Naive thymus-derived CD4-positive, alpha-beta T cell (primary cell): ENCODE measurements at regions of chr22 and their contacts with region 1.

Region 1: DNA sequence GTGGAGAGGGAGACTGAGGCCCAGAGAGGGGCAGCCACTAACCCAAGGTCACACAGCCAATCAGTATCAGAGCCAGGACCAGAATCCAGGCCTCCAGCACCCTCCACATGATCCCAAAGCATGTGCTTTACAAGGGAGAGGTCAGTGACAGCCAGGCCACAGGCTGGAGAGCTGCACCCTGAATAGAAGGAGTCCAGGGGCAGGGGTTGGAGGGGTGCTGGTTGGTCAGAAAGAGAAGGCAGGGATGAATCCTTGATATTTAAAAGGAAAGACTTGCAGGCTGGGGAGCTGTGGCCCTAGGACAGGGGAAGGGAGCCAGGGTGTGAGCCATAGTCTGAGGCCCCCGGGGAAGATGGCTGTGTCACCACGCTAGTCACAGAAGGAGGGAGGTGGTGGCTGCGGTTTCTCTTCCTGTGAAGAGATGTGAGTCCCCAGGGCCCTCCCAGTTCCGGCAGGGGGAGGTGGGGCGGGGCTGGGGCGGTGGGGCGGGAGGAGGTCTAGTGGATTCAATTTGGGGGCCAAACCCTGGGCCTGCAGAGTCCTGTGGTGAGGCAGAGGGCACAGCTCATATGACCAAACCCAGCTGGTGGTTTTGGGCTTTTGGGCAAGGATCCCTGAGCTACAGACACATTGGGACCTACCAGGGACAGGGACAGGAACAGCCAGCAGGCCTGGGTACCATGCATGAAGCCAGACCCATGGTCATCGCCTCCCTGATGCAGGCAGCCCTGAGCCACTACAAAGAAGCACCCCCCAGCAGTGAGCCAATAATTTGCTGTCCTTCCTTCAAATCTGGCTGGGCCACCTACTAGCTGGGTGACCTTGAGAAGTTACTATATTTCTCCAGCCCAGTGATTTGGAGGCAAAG is 14.0 kb downstream of the RAC2 start:
- DNase-seq: peak; percentile 60 to 93 (median 89)
- ATAC-seq: peak; percentile 93
- H3K4me3 ChIP-seq: peak overlapping the region; percentile 54
- H3K4me3 Mint-ChIP-seq: peak overlapping the region; percentile 75 to 99 (median 86)
- H3K27ac ChIP-seq: peak overlapping the region; percentile 90
- H3K27ac Mint-ChIP-seq: peak overlapping the region; percentile 96 to 100 (median 99)
- H3K4me1 ChIP-seq: peaks cover 80 to 92% of the 10 kb centered on the region in 2 donors
- H3K4me1 Mint-ChIP-seq: peaks cover 75 to 92% (median 87%) of the 10 kb centered on the region in 7 donors
- H3K27me3 ChIP-seq: no peaks in the 10 kb centered on the region
- H3K27me3 Mint-ChIP-seq: no peaks in the 10 kb centered on the region

Region 2: DNA sequence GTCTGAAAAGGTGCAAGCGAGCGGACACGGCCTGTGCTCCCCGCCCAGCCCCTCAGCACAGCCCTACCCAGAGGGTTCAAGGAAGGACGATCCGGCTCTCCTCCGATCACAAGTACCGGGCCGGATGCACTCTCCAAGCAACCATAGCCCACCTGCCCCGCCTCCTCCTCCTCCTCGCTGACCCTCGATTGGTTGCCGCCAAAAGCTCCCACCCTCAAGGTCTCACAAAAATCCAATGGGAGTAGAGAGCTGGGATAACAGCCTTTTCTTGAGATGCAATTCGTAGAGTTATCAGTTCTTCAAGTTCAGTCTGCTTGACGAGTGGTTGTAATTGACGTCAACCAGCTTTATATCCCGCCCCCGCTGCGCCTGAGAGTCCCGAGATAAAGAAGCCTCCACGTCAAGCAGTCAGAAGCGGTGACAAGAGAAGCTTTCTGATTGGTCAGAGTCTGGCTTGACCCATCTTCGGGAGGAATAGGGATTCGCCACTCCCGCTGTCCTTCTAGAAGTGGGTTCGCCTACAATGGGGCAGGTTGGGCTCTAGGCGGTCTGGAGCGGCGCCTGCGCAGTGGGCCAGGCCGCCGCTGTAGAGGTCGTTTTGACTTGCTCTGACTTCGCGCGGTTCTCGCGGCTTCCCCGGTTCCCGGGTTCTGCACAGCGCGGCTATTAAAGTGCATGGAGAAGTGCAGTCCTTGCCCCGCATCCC is 453.9 kb before region 1 on chr22 and contains the start of gene IFT27:
- CTCF ChIA-PET with region 1: no interaction called
- POLR2A ChIA-PET with region 1: no interaction called
- intact Hi-C with region 1: loop called in 1 of 2 experiments (anchors 1 kb)
- DNase-seq: peak; percentile 72 to 99 (median 98)
- ATAC-seq: peak; percentile 92
- H3K4me3 ChIP-seq: peak within 1 kb of the TSS; percentile 65
- H3K4me3 Mint-ChIP-seq: peak within 1 kb of the TSS; percentile 85 to 97 (median 92)
- H3K27ac ChIP-seq: peak within 1 kb of the TSS; percentile 90
- H3K27ac Mint-ChIP-seq: peak within 1 kb of the TSS; percentile 92 to 99 (median 96)
- H3K4me1 ChIP-seq: peaks cover 13 to 15% of the 10 kb centered on the region in 2 donors
- H3K4me1 Mint-ChIP-seq: peaks cover 18 to 44% (median 31%) of the 10 kb centered on the region in 7 donors
- H3K27me3 ChIP-seq: no peaks in the 10 kb centered on the region
- H3K27me3 Mint-ChIP-seq: no peaks in the 10 kb centered on the region
- total RNA-seq, gene IFT27: 16.6 to 40.9 (median 32.0) TPM

Region 3: GRCh38 chr22:37051391-37052385 is 178.4 kb before region 1 on chr22 and contains the start of gene KCTD17:
- CTCF ChIA-PET with region 1: no interaction called
- POLR2A ChIA-PET with region 1: no interaction called
- intact Hi-C with region 1: no loop called
- DNase-seq: peak; percentile 50 to 87 (median 67)
- ATAC-seq: peak; percentile 99
- H3K4me3 ChIP-seq: peak within 1 kb of the TSS; percentile 74
- H3K4me3 Mint-ChIP-seq: peak within 1 kb of the TSS; percentile 73 to 94 (median 86)
- H3K27ac ChIP-seq: peak within 1 kb of the TSS; percentile 72
- H3K27ac Mint-ChIP-seq: peak within 1 kb of the TSS in 8 of 9 donors; percentile 40 to 89 (median 80)
- H3K4me1 ChIP-seq: peaks cover 0 to 7% of the 10 kb centered on the region in 2 donors
- H3K4me1 Mint-ChIP-seq: peaks cover 5 to 15% (median 14%) of the 10 kb centered on the region in 7 donors
- H3K27me3 ChIP-seq: no peaks in the 10 kb centered on the region
- H3K27me3 Mint-ChIP-seq: no peaks in the 10 kb centered on the region
- total RNA-seq, gene KCTD17: 19.8 to 44.5 (median 24.9) TPM

Region 4: GRCh38 chr22:37121887-37122591 is 108.0 kb before region 1 on chr22:
- CTCF ChIA-PET with region 1: no interaction called
- POLR2A ChIA-PET with region 1: interaction called, 9 read pairs
- intact Hi-C with region 1: loop called in 1 of 2 experiments (anchors 1 kb)
- DNase-seq: peak; percentile 62 to 98 (median 94)
- ATAC-seq: peak; percentile 99
- H3K4me3 ChIP-seq: peak overlapping the region; percentile 30
- H3K4me3 Mint-ChIP-seq: peak overlapping the region; percentile 69 to 91 (median 79)
- H3K27ac ChIP-seq: peak overlapping the region; percentile 96
- H3K27ac Mint-ChIP-seq: peak overlapping the region; percentile 95 to 100 (median 98)
- H3K4me1 ChIP-seq: peaks cover 21 to 30% of the 10 kb centered on the region in 2 donors
- H3K4me1 Mint-ChIP-seq: peaks cover 19 to 86% (median 65%) of the 10 kb centered on the region in 7 donors
- H3K27me3 ChIP-seq: no peaks in the 10 kb centered on the region
- H3K27me3 Mint-ChIP-seq: peaks cover 0 to 2% (median 0%) of the 10 kb centered on the region in 5 donors

Region 5: DNA sequence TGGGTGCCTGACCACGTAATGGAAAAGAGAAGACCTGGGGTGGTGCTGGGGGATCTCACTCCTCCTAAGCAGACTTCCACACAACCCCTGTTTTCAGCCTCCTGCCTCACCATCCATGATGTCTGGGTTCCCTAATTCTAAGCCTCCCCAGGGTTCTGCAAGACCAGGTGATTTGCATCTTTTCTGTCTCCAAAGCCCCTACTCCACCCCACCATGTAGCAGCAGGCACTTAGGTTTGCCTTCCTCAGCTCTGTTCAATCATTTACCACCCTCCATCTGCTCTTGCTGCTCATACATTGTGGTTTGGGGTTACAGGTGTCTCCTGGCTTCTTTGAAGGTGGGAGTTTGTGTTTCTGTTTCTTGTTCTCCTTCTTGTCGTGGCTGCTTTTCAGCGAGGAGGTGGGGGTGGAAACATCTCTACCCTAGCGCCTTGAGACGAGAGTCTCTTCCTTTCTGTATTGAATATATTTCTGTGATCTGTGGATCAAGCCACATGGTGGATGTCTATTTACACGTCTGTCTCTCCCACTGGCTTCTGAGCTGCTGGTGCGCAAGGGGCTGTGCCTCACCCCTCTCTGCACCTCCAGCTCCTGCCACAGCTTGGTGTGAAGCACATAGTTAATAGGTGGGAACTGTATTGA is 11.1 kb before region 1 on chr22:
- CTCF ChIA-PET with region 1: interaction called, 20 read pairs
- POLR2A ChIA-PET with region 1: interaction called, 278 read pairs
- intact Hi-C with region 1: loop called (anchors 1 kb)
- DNase-seq: peak in 8 of 9 donors; percentile 59 to 97 (median 94)
- ATAC-seq: peak; percentile 89
- H3K4me3 ChIP-seq: peak overlapping the region; percentile 55
- H3K4me3 Mint-ChIP-seq: peak overlapping the region; percentile 74 to 92 (median 83)
- H3K27ac ChIP-seq: peak overlapping the region; percentile 77
- H3K27ac Mint-ChIP-seq: peak overlapping the region; percentile 79 to 99 (median 91)
- H3K4me1 ChIP-seq: peaks cover 61 to 76% of the 10 kb centered on the region in 2 donors
- H3K4me1 Mint-ChIP-seq: peaks cover 62 to 99% (median 92%) of the 10 kb centered on the region in 7 donors
- H3K27me3 ChIP-seq: no peaks in the 10 kb centered on the region
- H3K27me3 Mint-ChIP-seq: no peaks in the 10 kb centered on the region

Region 6: DNA sequence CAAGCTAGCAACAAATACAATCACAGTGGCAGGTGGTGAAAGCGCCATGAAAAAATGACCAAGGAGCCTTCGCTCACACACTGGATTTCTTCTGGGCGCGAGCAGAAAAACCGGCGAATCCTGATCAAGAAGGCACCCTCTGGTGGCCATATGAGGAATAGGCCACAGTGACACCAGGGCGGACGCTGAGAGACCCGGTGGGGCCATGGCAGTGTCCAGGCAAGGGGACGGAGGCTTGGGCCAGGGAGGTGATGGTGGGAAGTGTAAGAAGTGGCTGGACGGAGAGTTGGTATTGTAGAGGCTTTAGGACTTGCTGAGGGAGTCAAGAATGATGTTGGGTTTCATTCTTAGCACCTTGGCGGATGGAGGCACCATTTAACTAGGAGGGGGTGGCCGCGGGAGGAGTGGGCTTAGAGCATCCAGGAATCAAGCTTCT is 30.9 kb after region 1 on chr22:
- CTCF ChIA-PET with region 1: interaction called, 40 read pairs
- POLR2A ChIA-PET with region 1: interaction called, 26 read pairs
- intact Hi-C with region 1: loop called (anchors 1 to 5 kb)
- DNase-seq: peak; percentile 46 to 71 (median 64)
- ATAC-seq: peak; percentile 91
- H3K4me3 ChIP-seq: no peak overlapping the region
- H3K4me3 Mint-ChIP-seq: peak overlapping the region in 6 of 10 donors; percentile 1 to 33 (median 15)
- H3K27ac ChIP-seq: no peak overlapping the region
- H3K27ac Mint-ChIP-seq: peak overlapping the region in 8 of 9 donors; percentile 7 to 86 (median 56)
- H3K4me1 ChIP-seq: peaks cover 7 to 24% of the 10 kb centered on the region in 2 donors
- H3K4me1 Mint-ChIP-seq: peaks cover 23 to 32% (median 27%) of the 10 kb centered on the region in 7 donors
- H3K27me3 ChIP-seq: no peaks in the 10 kb centered on the region
- H3K27me3 Mint-ChIP-seq: peaks cover 0 to 13% (median 0%) of the 10 kb centered on the region in 5 donors

Region 7: GRCh38 chr22:37686002-37686982 is 456.3 kb after region 1 on chr22 and contains the start of gene NOL12:
- CTCF ChIA-PET with region 1: no interaction called
- POLR2A ChIA-PET with region 1: no interaction called
- intact Hi-C with region 1: no loop called
- DNase-seq: peak; percentile 63 to 82 (median 78)
- ATAC-seq: peak; percentile 91
- H3K4me3 ChIP-seq: peak within 1 kb of the TSS; percentile 82
- H3K4me3 Mint-ChIP-seq: peak within 1 kb of the TSS; percentile 93 to 98 (median 96)
- H3K27ac ChIP-seq: peak within 1 kb of the TSS; percentile 84
- H3K27ac Mint-ChIP-seq: peak within 1 kb of the TSS; percentile 88 to 99 (median 95)
- H3K4me1 ChIP-seq: peaks cover 18 to 22% of the 10 kb centered on the region in 2 donors
- H3K4me1 Mint-ChIP-seq: peaks cover 16 to 39% (median 33%) of the 10 kb centered on the region in 7 donors
- H3K27me3 ChIP-seq: no peaks in the 10 kb centered on the region
- H3K27me3 Mint-ChIP-seq: no peaks in the 10 kb centered on the region
- total RNA-seq, gene NOL12: 32.8 to 52.5 (median 45.3) TPM